ENCODE measurements at regions of chr10 and their contacts with region 1.

Region 1: DNA sequence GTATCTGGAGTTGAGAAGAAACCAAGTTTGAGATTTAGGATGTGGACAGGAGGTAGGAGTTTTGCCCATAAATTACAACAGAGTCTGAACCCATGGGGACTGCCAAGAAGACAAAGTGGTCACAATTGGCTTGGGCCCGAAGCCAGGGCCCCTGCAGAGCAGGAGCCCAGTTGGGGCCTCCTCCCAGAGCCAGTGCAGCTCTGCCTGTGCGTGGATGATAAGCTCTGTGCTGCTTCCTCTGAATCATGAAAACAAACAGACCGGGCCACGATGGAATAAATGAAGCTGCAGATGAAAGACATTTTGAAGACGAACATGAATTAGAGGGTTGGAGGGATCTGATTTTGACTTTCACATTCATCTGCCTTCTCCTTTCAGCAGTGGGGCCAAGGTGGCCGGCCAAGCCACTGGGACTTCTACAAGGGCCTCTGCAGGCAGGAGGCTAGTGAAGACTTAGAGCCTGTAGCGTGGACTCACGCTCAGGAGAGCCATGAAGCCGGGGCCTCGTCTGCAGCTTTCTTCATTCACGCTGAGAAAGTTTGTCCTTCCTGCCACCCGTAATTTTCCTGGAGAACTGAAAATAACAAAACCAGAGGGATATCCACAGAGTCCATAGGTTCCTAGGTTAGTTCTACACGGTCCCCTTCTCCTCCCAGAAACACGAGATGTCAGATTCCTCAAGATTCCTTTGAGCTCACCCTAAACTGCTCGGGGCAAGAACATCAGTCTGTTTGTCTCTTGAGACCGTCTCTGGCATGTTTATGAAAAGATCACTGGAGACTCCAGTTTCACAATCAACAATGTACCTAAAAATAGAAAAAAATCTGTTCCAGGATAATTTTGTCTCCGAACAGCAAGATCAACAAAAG is 156.7 kb upstream of the LYZL1 start:
- DNase-seq: no peak
- ATAC-seq: no peak
- H3K4me3 ChIP-seq: no peak overlapping the region
- H3K27ac ChIP-seq: peak overlapping the region; percentile 29; the same call in 1 of the 2 replicates
- H3K4me1 ChIP-seq: no peaks in the 10 kb centered on the region
- H3K27me3 ChIP-seq: peaks cover 3% of the 10 kb centered on the region; the same call in 1 of the 2 replicates
- CTCF ChIP-seq: no peak

Region 2: GRCh38 chr10:28663576-28664313 is 468.4 kb before region 1 on chr10:
- CTCF ChIA-PET with region 1: interaction called, 3 read pairs
- POLR2A ChIA-PET with region 1: no interaction called
- in situ Hi-C with region 1: no loop called
- intact Hi-C with region 1: loop called (anchors 5 kb)
- DNase-seq: peak; percentile 58
- ATAC-seq: peak; percentile 91
- H3K4me3 ChIP-seq: no peak overlapping the region
- H3K27ac ChIP-seq: no peak overlapping the region
- H3K4me1 ChIP-seq: no peaks in the 10 kb centered on the region; the same call in 1 of the 2 replicates
- H3K27me3 ChIP-seq: 0 out of 2 replicates have a peak, but pooled peaks cover 11% of the 10 kb centered on the region
- CTCF ChIP-seq: peak; percentile 90

Region 3: GRCh38 chr10:28676968-28677887 is 455.0 kb before region 1 on chr10 and contains the start of gene BAMBI:
- CTCF ChIA-PET with region 1: no interaction called
- POLR2A ChIA-PET with region 1: no interaction called
- in situ Hi-C with region 1: no loop called
- intact Hi-C with region 1: loop called (anchors 5 kb)
- DNase-seq: no peak
- ATAC-seq: peak; percentile 98
- H3K4me3 ChIP-seq: peak within 1 kb of the TSS; percentile 41 to 52
- H3K27ac ChIP-seq: no peak within 1 kb of the TSS
- H3K4me1 ChIP-seq: peaks cover 10% of the 10 kb centered on the region
- H3K27me3 ChIP-seq: peaks cover 16% of the 10 kb centered on the region
- CTCF ChIP-seq: peak; percentile 84
- total RNA-seq, gene BAMBI: 3.9 TPM

Region 4: DNA sequence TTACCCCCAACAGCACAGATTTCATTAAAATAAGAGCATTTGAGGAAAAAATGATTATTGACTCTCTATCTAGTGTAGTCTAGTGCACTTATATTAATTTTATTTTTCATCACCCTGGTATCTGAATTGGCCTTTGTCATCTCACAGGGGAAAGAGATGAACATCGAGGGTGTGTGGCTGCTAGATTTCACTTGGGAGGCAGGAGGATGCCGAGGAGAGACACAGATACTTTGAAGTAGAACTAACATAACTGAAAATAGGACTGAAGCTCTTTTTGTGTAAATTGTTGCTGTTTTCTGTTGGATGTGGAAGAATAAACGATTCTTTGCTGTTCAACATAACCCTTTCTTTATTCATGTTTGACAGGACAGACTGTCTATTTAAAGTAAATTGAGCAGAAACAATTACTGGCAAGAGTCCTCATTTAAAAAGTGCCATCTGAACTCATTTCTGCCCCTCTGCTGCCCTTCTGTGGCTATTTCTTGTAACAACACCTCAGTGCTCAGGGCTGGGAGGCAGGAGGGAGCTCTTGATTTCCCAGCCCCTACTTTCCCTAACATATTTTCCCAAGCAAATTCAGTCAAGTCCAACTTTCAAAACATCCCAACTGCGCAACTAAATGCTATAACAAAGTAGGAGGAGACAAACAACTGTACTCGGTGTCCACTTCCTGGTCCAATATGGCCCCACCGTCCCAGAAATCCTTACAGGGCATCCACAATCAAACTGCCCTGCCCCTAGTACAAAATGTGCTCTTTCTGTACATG is 172.3 kb after region 1 on chr10:
- CTCF ChIA-PET with region 1: no interaction called
- POLR2A ChIA-PET with region 1: no interaction called
- in situ Hi-C with region 1: no loop called
- intact Hi-C with region 1: loop called (anchors 5 kb)
- DNase-seq: peak; percentile 39
- ATAC-seq: peak; percentile 85; the same call in 1 of the 2 replicates
- H3K4me3 ChIP-seq: no peak overlapping the region
- H3K27ac ChIP-seq: peak overlapping the region; percentile 51; the same call in 1 of the 2 replicates
- H3K4me1 ChIP-seq: no peaks in the 10 kb centered on the region; the same call in 1 of the 2 replicates
- H3K27me3 ChIP-seq: no peaks in the 10 kb centered on the region
- CTCF ChIP-seq: peak; percentile 75